ENCODE measurements at regions of chr15 and their contacts with region 1.

Region 1: GRCh38 chr15:101008158-101009139 is 89.3 kb downstream of the LRRK1 start:
- DNase-seq: peak; percentile 87 to 89
- ATAC-seq: peak; percentile 86 to 92
- H3K4me3 ChIP-seq: peak overlapping the region; percentile 55
- H3K27ac ChIP-seq: peak overlapping the region; percentile 81 to 82
- H3K4me1 ChIP-seq: peaks cover 13% of the 10 kb centered on the region; the same call in 2 of the 3 replicates
- CTCF ChIP-seq: peak; percentile 94
- EP300 ChIP-seq: no peak
- POLR2A ChIP-seq: peak; percentile 52
- RAD21 ChIP-seq: peak; percentile 58 to 59

Region 2: DNA sequence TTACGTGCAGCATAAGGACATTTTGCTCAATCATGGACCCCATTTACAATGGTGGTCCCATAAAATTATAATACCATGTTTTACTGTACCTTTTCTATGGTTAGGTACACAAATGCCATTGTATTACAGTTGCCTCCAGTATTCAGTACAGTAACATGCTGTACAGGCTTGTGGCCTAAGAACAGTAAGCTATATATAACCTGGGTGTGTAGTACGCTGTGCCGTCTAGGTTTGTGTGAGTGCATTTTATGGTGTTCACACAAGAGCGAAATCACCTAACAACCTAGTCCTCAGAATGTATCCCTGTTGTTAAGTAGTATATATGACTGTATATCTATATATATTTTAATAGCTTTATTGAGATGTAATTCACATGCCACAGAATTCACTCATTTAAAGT is 393.5 kb before region 1 on chr15:
- CTCF ChIA-PET with region 1: interaction called, 32 read pairs
- POLR2A ChIA-PET with region 1: no interaction called
- DNase-seq: no peak
- ATAC-seq: no peak
- H3K4me3 ChIP-seq: no peak overlapping the region
- H3K27ac ChIP-seq: no peak overlapping the region
- H3K4me1 ChIP-seq: no peaks in the 10 kb centered on the region
- CTCF ChIP-seq: no peak
- EP300 ChIP-seq: no peak
- POLR2A ChIP-seq: no peak
- RAD21 ChIP-seq: no peak

Region 3: DNA sequence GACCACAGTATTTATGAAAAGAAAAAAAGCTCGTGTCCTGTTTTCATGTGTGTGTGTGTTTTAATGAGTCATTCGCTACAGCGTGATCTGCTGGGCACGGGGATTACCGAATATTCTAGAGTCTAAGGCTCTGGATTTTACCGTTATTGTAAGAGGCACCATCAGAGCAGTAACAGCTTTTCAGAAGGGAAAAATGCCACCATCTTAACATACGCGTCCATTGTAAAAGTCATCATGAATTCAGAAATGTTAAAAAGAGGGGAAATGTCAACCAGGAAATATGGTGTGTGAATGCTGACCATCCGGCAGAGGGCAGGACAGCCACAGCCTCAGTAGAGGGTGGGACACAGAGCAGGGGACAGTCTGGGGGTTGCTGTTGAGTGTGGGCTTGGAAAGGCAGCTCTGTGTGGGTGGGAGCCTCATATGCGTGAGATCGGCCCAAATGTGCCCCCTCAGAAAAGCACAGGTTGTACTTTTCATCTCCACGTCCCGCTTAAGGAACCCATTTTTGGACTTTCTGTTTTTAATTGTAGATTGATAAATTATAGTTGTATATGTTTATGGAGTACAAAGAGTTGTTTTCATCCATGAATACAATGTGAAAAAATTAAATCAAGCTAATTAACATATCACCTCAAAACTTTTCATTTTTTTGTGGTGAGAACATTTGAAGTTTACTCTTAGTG is 336.4 kb before region 1 on chr15:
- CTCF ChIA-PET with region 1: interaction called, 35 read pairs
- POLR2A ChIA-PET with region 1: no interaction called
- DNase-seq: peak; percentile 69 to 84
- ATAC-seq: peak; percentile 97 to 99
- H3K4me3 ChIP-seq: peak overlapping the region; percentile 33
- H3K27ac ChIP-seq: peak overlapping the region; percentile 68 to 73
- H3K4me1 ChIP-seq: peaks cover 5% of the 10 kb centered on the region
- CTCF ChIP-seq: peak; percentile 95
- EP300 ChIP-seq: no peak
- POLR2A ChIP-seq: no peak
- RAD21 ChIP-seq: peak; percentile 99

Region 4: GRCh38 chr15:100802421-100803170 is 205.9 kb before region 1 on chr15:
- CTCF ChIA-PET with region 1: no interaction called
- POLR2A ChIA-PET with region 1: no interaction called
- DNase-seq: no peak
- ATAC-seq: peak in 1 of 2 experiments; percentile 24; a peak in 1 of 6 replicates
- H3K4me3 ChIP-seq: no peak overlapping the region
- H3K27ac ChIP-seq: no peak overlapping the region
- H3K4me1 ChIP-seq: no peaks in the 10 kb centered on the region
- CTCF ChIP-seq: no peak
- EP300 ChIP-seq: no peak
- POLR2A ChIP-seq: no peak
- RAD21 ChIP-seq: no peak

Region 5: GRCh38 chr15:100879464-100880138 is 128.8 kb before region 1 on chr15 and contains the start of gene ALDH1A3:
- CTCF ChIA-PET with region 1: interaction called, 36 read pairs
- POLR2A ChIA-PET with region 1: no interaction called
- DNase-seq: peak; percentile 65 to 89
- ATAC-seq: peak; percentile 81 to 91
- H3K4me3 ChIP-seq: peak within 1 kb of the TSS; percentile 75
- H3K27ac ChIP-seq: peak within 1 kb of the TSS; percentile 84 to 91
- H3K4me1 ChIP-seq: peaks cover 5% of the 10 kb centered on the region
- CTCF ChIP-seq: no peak
- EP300 ChIP-seq: no peak
- POLR2A ChIP-seq: peak; percentile 84
- RAD21 ChIP-seq: no peak; a peak in 1 of 5 replicates
- polyA plus RNA-seq, gene ALDH1A3: 9.3 and 11.9 TPM in 2 replicates

Region 6: DNA sequence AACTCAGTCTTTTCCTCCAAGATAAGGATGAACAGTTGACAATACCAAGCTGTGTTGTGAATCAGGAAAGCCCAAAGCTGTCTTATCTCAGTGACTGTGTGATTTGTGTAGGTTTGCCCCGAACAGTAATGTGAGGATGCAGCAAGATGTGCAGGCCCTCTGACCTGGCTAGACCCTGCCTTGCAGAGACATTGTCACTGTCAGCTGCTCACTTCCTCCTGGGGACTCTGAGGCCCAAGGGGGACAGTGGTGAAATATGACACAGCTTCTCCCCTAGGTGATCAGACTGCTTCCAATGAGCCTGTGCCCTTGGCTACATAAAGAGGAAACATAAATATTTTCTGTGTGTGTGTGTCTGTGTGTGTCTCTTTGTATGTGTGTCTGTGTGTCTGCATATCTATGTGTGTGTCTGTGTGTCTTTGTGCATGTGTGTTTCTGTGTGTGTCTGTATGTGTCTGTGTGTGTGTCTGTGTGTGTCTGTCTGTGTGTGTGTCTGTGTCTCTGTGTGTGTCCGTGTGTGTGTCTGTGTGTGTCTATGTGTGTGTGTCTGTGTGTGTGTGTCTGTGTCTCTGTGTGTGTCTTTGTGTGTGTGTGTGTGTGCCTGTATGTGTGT is 67.6 kb before region 1 on chr15:
- CTCF ChIA-PET with region 1: interaction called, 50 read pairs
- POLR2A ChIA-PET with region 1: no interaction called
- DNase-seq: no peak
- ATAC-seq: no peak
- H3K4me3 ChIP-seq: no peak overlapping the region
- H3K27ac ChIP-seq: peak overlapping the region in 1 of 2 experiments; percentile 24; a peak in 1 of 6 replicates
- H3K4me1 ChIP-seq: peaks cover 7% of the 10 kb centered on the region; the same call in 2 of the 3 replicates
- CTCF ChIP-seq: no peak
- EP300 ChIP-seq: no peak
- POLR2A ChIP-seq: no peak
- RAD21 ChIP-seq: no peak

Region 7: GRCh38 chr15:101024073-101024695 is 15.7 kb after region 1 on chr15:
- CTCF ChIA-PET with region 1: interaction called, 132 read pairs
- POLR2A ChIA-PET with region 1: no interaction called
- DNase-seq: no peak
- ATAC-seq: no peak; a peak in 1 of 6 replicates
- H3K4me3 ChIP-seq: no peak overlapping the region
- H3K27ac ChIP-seq: no peak overlapping the region
- H3K4me1 ChIP-seq: no peaks in the 10 kb centered on the region
- CTCF ChIP-seq: no peak
- EP300 ChIP-seq: no peak
- POLR2A ChIP-seq: no peak
- RAD21 ChIP-seq: no peak

Region 8: DNA sequence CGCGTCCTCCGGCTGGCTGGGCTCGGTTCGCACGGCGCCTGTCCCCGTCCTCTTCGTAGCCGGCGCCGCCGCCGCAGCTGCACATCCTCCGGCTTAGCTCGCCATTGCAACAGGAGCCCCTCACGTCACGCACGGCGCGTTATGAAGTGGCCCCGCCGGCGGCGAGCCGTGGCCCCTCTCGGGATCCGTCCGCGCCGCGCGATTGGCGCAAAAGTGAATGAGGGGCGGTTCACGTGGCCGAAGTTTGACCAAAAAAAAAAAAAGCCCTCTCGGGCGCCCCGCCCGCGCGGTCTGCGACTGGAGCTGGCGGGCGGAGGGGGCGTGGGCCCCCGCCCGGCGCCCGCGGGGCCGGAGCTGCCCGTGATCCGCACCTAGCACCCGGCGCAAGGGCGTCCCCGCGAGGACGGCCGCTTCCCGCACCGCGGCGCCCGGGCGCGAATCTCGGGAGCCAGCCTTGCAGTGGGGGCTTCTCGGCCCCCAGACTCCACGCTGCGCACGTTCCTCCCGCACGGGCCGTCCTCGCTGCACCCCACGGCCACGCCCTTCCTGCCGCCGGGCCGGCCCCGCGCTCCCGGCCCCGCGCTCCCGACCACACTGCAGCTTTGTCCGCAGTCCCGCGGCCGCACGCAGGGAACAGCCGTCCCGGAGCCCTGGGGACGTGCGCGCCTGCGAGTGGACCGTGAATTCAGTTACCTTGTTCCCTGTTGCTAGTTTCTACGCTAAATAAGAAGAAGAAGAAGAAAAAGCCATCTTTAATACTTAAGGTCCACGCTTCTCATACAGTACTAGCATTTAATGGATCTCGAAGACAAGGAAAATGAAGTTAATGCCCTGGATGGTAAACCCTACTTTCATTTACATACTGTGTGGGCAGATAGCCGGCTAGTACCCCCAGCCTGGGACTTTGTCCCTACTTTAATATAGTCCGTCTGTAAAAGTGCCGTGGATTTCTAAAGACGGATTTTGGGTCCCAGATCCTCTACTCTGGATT is 243.7 kb after region 1 on chr15 and contains the start of gene CHSY1:
- CTCF ChIA-PET with region 1: interaction called, 216 read pairs
- POLR2A ChIA-PET with region 1: interaction called, 5 read pairs
- DNase-seq: peak; percentile 85 to 92
- ATAC-seq: peak; percentile 74 to 85
- H3K4me3 ChIP-seq: peak within 1 kb of the TSS; percentile 82
- H3K27ac ChIP-seq: peak within 1 kb of the TSS; percentile 85 to 92
- H3K4me1 ChIP-seq: peaks cover 17% of the 10 kb centered on the region
- CTCF ChIP-seq: peak; percentile 44
- EP300 ChIP-seq: no peak
- POLR2A ChIP-seq: peak; percentile 93
- RAD21 ChIP-seq: peak in 1 of 2 experiments; percentile 56; a peak in 3 of 5 replicates
- polyA plus RNA-seq, gene CHSY1: 27.9 and 28.1 TPM in 2 replicates

Measured in A549 (cell line).